ENCODE measurements at regions of chr19 and their contacts with region 1.

Region 1: DNA sequence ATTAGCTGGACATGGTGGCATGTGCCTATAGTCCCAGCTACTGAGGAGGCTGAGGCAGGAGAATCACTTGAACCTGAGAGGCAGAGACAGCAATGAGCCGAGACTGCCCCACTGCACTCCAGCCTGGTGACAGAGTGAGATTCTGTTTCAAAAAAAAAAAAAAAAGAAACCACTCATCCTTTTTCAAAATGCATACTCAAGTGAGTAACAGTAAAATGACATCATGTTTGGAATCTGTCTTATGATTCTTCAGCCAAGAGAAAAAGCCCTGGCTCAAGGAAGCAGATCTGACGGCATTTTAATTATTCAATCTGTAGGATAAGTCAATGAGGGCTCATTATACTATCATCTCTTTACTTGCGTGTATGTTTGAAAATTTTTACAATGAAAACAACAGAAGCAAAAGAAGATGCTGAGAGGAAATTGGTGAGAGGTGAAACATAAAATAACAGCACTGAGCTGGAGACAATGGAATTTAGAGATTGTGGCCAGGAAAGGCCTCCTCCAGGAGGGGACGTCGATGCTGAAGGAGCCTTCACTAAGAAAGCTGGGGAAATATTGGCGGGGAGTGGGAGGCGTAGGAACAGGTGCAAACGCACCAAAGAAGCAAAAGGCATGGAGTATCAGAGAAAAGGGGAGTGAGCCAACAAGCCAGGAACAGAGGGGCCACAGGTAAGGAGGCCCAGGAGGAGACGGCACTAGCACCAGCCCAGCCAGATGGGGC is 12.9 kb upstream of the CCNE1 start:
- DNase-seq: no peak
- ATAC-seq: peak in 1 of 2 experiments; percentile 32; a peak in 1 of 6 replicates
- H3K4me3 ChIP-seq: no peak overlapping the region
- H3K27ac ChIP-seq: no peak overlapping the region
- H3K4me1 ChIP-seq: no peaks in the 10 kb centered on the region
- CTCF ChIP-seq: no peak
- EP300 ChIP-seq: no peak
- POLR2A ChIP-seq: no peak
- RAD21 ChIP-seq: no peak

Region 2: GRCh38 chr19:29785955-29786589 is 12.9 kb before region 1 on chr19:
- CTCF ChIA-PET with region 1: interaction called, 11 read pairs
- POLR2A ChIA-PET with region 1: no interaction called
- DNase-seq: peak in 1 of 2 experiments; percentile 53
- ATAC-seq: peak; percentile 50 to 79; a peak in 4 of 6 replicates
- H3K4me3 ChIP-seq: no peak overlapping the region
- H3K27ac ChIP-seq: no peak overlapping the region
- H3K4me1 ChIP-seq: no peaks in the 10 kb centered on the region
- CTCF ChIP-seq: peak; percentile 56
- EP300 ChIP-seq: no peak
- POLR2A ChIP-seq: no peak
- RAD21 ChIP-seq: peak; percentile 38 to 46; a peak in 3 of 5 replicates

Region 3: DNA sequence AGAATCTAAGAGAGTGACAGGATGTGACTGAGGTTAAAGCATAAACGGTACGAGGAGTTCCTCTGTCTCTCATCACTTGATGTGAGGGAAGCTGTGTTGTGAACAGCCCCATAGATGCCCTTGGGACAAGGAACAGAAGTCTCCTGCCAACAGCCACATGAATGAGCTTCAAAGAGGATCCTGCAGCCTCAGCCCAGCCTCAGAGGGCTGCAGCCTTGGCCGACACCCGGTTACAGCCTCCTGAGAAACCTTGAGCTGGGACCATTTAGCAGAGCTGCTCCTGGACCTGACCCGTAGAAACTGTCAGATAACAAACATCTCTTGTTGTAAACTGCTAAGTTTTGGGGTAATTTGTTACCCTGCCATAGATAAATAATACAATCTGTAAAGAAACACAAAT is 67.1 kb after region 1 on chr19:
- CTCF ChIA-PET with region 1: no interaction called
- POLR2A ChIA-PET with region 1: no interaction called
- DNase-seq: no peak
- ATAC-seq: no peak
- H3K4me3 ChIP-seq: no peak overlapping the region
- H3K27ac ChIP-seq: no peak overlapping the region
- H3K4me1 ChIP-seq: no peaks in the 10 kb centered on the region
- CTCF ChIP-seq: no peak
- EP300 ChIP-seq: no peak
- POLR2A ChIP-seq: no peak
- RAD21 ChIP-seq: no peak

Region 4: DNA sequence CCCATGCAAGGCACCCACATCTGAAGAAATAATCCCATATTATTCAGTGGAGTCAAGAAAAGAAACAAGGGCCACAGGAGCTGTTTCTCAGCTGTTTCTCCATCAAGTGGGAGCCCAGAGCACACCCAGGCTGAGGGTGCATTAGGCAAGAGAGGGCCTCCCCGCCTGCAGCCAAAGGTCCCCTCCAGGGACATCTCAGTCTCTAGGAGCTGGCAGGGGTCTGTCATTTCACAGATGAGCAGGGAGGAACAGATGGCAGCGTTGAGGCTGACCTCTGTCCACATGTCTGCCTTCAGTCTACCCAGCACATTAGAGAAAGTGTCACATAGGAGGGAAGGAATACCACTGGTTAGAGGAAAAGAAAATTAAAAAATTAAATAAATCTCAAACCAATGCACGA is 730.9 kb after region 1 on chr19:
- CTCF ChIA-PET with region 1: no interaction called
- POLR2A ChIA-PET with region 1: interaction called, 11 read pairs
- DNase-seq: no peak
- ATAC-seq: no peak
- H3K4me3 ChIP-seq: no peak overlapping the region
- H3K27ac ChIP-seq: no peak overlapping the region
- H3K4me1 ChIP-seq: no peaks in the 10 kb centered on the region
- CTCF ChIP-seq: no peak
- EP300 ChIP-seq: no peak
- POLR2A ChIP-seq: no peak
- RAD21 ChIP-seq: no peak

Region 5: GRCh38 chr19:31002518-31003244 is 1203.7 kb after region 1 on chr19:
- CTCF ChIA-PET with region 1: no interaction called
- POLR2A ChIA-PET with region 1: no interaction called
- DNase-seq: no peak
- ATAC-seq: no peak; a peak in 1 of 6 replicates
- H3K4me3 ChIP-seq: no peak overlapping the region
- H3K27ac ChIP-seq: no peak overlapping the region
- H3K4me1 ChIP-seq: no peaks in the 10 kb centered on the region
- CTCF ChIP-seq: no peak
- EP300 ChIP-seq: no peak
- POLR2A ChIP-seq: no peak
- RAD21 ChIP-seq: peak; percentile 24 to 27; a peak in 1 of 5 replicates

Measured in A549 (cell line).